ENCODE measurements at regions of chr16 and their contacts with region 1.

Region 1: DNA sequence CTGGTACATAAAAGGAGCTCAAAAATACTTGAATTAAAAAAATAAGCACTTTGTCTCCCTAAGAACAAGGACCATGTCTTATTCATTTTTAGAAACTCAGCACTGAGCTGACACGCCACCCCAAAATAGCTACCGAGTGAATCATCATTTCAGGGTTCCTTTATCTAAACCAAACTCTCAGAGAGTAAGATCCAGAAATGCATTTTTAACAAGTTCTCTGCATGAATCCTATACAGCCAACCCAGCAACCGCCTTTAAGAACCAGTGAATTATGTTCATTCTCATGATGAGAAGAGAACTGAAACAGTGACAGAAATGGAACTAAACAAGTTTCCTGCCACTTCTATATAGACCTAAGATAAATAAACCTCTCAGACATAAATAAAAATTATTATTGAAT is 8.7 kb downstream of the C16orf87 start:
- DNase-seq: no peak
- H3K4me3 Mint-ChIP-seq: no peak overlapping the region
- H3K27ac Mint-ChIP-seq: no peak overlapping the region
- H3K4me1 Mint-ChIP-seq: peaks cover 29% of the 10 kb centered on the region
- H3K27me3 Mint-ChIP-seq: no peaks in the 10 kb centered on the region

Region 2: DNA sequence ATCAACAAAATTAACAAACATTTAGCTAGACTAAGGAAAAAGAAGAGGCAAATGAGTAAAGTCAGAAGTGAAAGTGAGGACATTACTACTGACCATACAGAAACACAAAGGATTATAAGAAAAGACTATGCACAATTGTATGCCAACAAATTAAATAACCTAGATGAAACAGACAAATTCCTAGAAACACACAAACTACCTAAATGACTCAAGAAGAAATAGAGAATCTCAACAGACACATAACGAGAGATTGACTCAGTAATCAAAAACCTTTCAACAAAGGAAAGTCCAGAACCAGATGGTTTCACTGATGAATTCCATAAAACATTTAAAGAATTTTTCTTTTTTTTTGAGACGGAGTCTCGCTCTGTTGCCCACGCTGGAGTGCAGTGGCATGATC is 38.5 kb before region 1 on chr16:
- intact Hi-C with region 1: loop called (anchors 5 kb)
- DNase-seq: no peak
- H3K4me3 Mint-ChIP-seq: no peak overlapping the region
- H3K27ac Mint-ChIP-seq: no peak overlapping the region
- H3K4me1 Mint-ChIP-seq: peaks cover 12% of the 10 kb centered on the region
- H3K27me3 Mint-ChIP-seq: no peaks in the 10 kb centered on the region

Region 3: GRCh38 chr16:46808997-46809396 is 13.3 kb before region 1 on chr16:
- intact Hi-C with region 1: loop called (anchors 1 kb)
- DNase-seq: no peak
- H3K4me3 Mint-ChIP-seq: no peak overlapping the region
- H3K27ac Mint-ChIP-seq: no peak overlapping the region
- H3K4me1 Mint-ChIP-seq: peaks cover 32% of the 10 kb centered on the region
- H3K27me3 Mint-ChIP-seq: no peaks in the 10 kb centered on the region

Region 4: DNA sequence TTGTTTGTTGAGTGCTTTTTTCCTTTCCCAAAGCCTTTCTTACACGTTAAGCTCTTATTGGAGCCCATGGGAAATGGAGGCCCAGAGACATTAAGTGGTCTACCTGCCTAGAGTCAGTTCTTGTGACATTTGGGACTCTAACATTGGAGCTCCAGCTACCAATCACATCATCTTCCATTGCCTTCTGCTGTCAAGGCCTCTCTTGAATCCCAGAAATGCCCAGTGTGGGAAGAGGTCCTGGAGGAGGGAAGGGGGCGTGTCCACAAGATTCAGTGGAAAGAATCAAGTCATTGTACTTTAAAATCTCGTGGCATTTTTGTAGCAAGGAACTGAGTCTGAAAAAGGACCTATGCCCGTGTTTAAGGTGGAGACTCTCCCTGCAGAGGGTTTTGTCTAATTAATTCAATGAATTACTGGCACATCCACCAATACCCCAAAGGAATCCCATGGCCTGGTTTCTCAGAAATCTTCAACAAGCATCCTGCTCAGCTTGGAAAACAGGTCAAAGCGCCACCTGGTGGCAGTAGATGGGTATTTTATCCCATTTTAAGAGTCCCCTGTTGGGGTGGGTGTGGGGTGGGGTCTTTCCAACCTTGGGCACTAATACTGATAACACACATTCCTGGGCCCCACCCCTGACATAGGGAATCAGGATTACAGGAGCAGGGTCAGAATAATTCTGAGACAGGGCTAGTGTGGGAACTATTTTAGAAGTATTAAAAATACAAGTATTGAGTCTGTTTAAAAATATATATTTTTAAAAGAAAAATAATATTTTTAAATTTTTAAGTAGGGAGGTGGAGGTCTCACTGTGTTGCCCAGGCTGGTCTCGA is 86.5 kb after region 1 on chr16:
- intact Hi-C with region 1: no loop called
- DNase-seq: peak; percentile 20
- H3K4me3 Mint-ChIP-seq: no peak overlapping the region
- H3K27ac Mint-ChIP-seq: no peak overlapping the region
- H3K4me1 Mint-ChIP-seq: peaks cover 12% of the 10 kb centered on the region
- H3K27me3 Mint-ChIP-seq: no peaks in the 10 kb centered on the region

Region 5: GRCh38 chr16:46973207-46973995 is 151.1 kb after region 1 on chr16 and contains the start of gene DNAJA2:
- intact Hi-C with region 1: loop called (anchors 5 kb)
- DNase-seq: peak; percentile 87
- H3K4me3 Mint-ChIP-seq: peak within 1 kb of the TSS; percentile 98
- H3K27ac Mint-ChIP-seq: peak within 1 kb of the TSS; percentile 96
- H3K4me1 Mint-ChIP-seq: peaks cover 45% of the 10 kb centered on the region
- H3K27me3 Mint-ChIP-seq: no peaks in the 10 kb centered on the region
- total RNA-seq, gene DNAJA2: 65.9 and 74.4 TPM in 2 replicates

Region 6: DNA sequence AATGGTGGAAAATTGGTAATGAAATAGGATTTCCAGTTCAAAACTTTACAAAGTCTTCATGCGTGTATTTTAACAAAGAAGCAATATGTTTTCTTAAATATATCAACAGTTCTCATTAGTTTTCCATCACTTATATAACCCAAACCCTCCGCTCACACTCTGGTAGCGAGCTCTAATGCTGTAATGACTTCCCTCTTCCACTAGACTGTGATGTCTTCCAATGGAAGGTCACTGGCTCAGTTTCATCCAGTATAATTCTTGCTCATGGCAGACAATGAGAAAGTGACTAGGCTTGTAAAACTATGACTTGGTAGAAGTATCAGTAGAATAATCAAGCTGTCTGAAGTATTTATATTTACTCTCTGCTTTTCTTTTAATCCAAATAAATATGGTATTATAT is 288.7 kb after region 1 on chr16:
- intact Hi-C with region 1: loop called (anchors 10 kb)
- DNase-seq: no peak
- H3K4me3 Mint-ChIP-seq: no peak overlapping the region
- H3K27ac Mint-ChIP-seq: no peak overlapping the region
- H3K4me1 Mint-ChIP-seq: peaks cover 11% of the 10 kb centered on the region
- H3K27me3 Mint-ChIP-seq: peaks cover 30% of the 10 kb centered on the region

Region 7: DNA sequence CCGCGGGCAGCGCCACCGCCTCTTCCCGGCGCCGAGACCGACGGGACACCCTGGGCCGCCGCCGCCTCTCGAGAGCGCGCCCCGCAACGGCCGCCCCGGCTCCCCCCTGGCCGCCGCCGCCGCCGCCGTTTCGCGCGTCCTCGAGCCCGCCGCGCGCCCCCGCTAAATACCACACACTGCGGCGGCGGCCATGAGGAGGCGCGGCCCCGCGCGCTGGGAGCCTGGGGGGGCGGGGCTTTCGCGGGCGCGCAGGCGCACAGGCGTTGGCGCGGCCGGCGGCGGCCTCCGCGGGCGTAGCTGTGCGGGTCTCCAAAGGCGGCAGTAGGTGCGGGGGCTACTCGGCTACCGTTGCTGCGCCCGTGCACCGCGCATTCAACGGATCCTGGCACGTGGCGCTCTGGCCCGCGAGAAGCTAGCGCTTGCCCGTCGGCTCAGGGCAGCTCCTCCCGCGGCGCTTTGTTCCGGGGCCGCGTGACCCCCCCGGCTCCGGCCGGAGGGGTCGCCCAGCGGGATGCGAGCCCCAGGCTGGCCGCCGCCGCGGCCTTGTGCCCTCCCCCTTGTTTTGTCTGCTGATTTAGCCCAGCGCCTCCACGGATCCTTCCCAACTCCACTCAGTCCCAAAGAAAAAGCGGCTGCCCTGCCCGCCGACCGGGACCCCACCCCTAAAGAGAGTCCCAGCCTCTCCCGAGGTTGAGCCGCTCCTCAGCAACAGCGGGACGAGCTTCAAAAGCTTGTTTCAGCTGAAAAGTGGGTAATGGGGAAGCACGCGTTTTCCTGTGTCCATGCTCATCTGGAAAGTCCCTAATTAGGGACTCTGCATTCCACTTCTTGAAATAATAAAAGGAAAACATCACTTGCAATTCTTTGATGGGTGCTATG is 1563.2 kb after region 1 on chr16 and contains the start of gene SIAH1:
- intact Hi-C with region 1: loop called (anchors 5 kb)
- DNase-seq: peak; percentile 86
- H3K4me3 Mint-ChIP-seq: peak within 1 kb of the TSS; percentile 94
- H3K27ac Mint-ChIP-seq: peak within 1 kb of the TSS; percentile 92
- H3K4me1 Mint-ChIP-seq: peaks cover 23% of the 10 kb centered on the region
- H3K27me3 Mint-ChIP-seq: no peaks in the 10 kb centered on the region
- total RNA-seq, gene SIAH1: 16.2 and 17.0 TPM in 2 replicates

Measured in activated T-helper 2 cell treated with anti-CD3 and anti-CD28 coated beads, Interferon-gamma antibody, Interleukin-2, Interleukin-4, amounts not matched to agents 10 μg/mL and 5 μg/mL and 100 μg/mL, durations not matched to agents 14 hours and 24 hours and 36 hours (primary cell).